RWPE1 (cell line): ENCODE measurements at regions of chr19 and their contacts with region 1.

Region 1: GRCh38 chr19:55301459-55302317 is 17.9 kb downstream of the BRSK1 start:
- DNase-seq: peak; percentile 98
- H3K27ac ChIP-seq: peak overlapping the region; percentile 54
- CTCF ChIP-seq: peak; percentile 93

Region 2: GRCh38 chr19:55088543-55089341 is 212.9 kb before region 1 on chr19:
- CTCF ChIA-PET with region 1: interaction called, 10 read pairs
- POLR2A ChIA-PET with region 1: no interaction called
- DNase-seq: peak; percentile 69
- H3K27ac ChIP-seq: peak overlapping the region; percentile 54
- CTCF ChIP-seq: peak; percentile 82

Region 3: GRCh38 chr19:55344444-55344843 is 42.8 kb after region 1 on chr19:
- CTCF ChIA-PET with region 1: interaction called, 13 read pairs
- POLR2A ChIA-PET with region 1: interaction called, 4 read pairs
- DNase-seq: no peak
- H3K27ac ChIP-seq: peak overlapping the region; percentile 97
- CTCF ChIP-seq: no peak

Region 4: GRCh38 chr19:55383789-55384577 is 82.3 kb after region 1 on chr19 and contains the start of gene TMEM238:
- CTCF ChIA-PET with region 1: interaction called, 21 read pairs
- POLR2A ChIA-PET with region 1: interaction called, 9 read pairs
- DNase-seq: no peak
- H3K27ac ChIP-seq: peak within 1 kb of the TSS; percentile 98
- CTCF ChIP-seq: peak; percentile 59

Region 5: GRCh38 chr19:55407800-55408532 is 106.3 kb after region 1 on chr19:
- CTCF ChIA-PET with region 1: no interaction called
- POLR2A ChIA-PET with region 1: no interaction called
- DNase-seq: peak; percentile 100
- H3K27ac ChIP-seq: peak overlapping the region; percentile 97
- CTCF ChIP-seq: no peak